Naive thymus-derived CD4-positive, alpha-beta T cell (primary cell): ENCODE measurements at regions of chr3 and their contacts with region 1.

Region 1: DNA sequence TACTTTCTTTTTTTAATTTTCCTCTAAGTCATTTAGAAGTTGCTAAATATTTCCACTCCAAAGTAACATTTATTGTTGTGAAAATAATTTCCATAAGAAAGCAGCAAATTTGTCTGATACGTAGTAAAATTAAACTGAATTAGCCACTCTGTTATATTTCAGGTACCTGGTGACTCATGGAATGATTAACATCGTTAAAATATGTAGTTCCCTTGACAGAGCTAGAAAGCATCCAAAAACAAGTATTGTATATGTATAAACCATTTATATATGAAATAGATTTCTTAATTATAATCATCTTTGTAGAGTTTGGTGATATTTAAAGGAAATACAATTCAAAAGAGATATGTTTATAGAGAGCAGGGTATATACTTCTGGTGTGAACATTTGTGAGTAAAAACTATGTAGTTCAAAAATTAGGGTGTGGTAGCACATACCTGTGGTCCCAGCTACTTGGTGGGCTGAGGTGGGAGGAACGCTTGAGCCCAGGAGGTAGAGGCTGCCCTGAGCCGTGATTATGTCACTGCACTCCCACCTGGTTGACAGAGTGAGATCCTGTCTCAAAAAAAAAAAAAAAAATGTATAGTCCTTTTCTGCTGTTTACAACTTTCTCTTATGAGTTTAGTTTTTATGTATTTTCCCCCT is 36.6 kb downstream of the ATP11B start:
- DNase-seq: no peak
- ATAC-seq: no peak
- H3K4me3 ChIP-seq: no peak overlapping the region
- H3K4me3 Mint-ChIP-seq: no peak overlapping the region
- H3K27ac ChIP-seq: no peak overlapping the region
- H3K27ac Mint-ChIP-seq: peak overlapping the region in 1 of 9 donors; percentile 11
- H3K4me1 ChIP-seq: peaks cover 0 to 2% of the 10 kb centered on the region in 2 donors
- H3K4me1 Mint-ChIP-seq: peaks cover 20 to 44% (median 34%) of the 10 kb centered on the region in 7 donors
- H3K27me3 ChIP-seq: no peaks in the 10 kb centered on the region
- H3K27me3 Mint-ChIP-seq: no peaks in the 10 kb centered on the region

Region 2: GRCh38 chr3:182810574-182811268 is 19.2 kb before region 1 on chr3:
- CTCF ChIA-PET with region 1: interaction called, 3 read pairs
- POLR2A ChIA-PET with region 1: no interaction called
- intact Hi-C with region 1: loop called in 1 of 2 experiments (anchors 2 kb)
- DNase-seq: no peak
- ATAC-seq: no peak
- H3K4me3 ChIP-seq: no peak overlapping the region
- H3K4me3 Mint-ChIP-seq: peak overlapping the region in 3 of 10 donors; percentile 13 to 59 (median 44)
- H3K27ac ChIP-seq: no peak overlapping the region
- H3K27ac Mint-ChIP-seq: peak overlapping the region in 1 of 9 donors; percentile 55
- H3K4me1 ChIP-seq: peaks cover 13 to 36% of the 10 kb centered on the region in 2 donors
- H3K4me1 Mint-ChIP-seq: peaks cover 43 to 96% (median 84%) of the 10 kb centered on the region in 7 donors
- H3K27me3 ChIP-seq: no peaks in the 10 kb centered on the region
- H3K27me3 Mint-ChIP-seq: no peaks in the 10 kb centered on the region

Region 3: DNA sequence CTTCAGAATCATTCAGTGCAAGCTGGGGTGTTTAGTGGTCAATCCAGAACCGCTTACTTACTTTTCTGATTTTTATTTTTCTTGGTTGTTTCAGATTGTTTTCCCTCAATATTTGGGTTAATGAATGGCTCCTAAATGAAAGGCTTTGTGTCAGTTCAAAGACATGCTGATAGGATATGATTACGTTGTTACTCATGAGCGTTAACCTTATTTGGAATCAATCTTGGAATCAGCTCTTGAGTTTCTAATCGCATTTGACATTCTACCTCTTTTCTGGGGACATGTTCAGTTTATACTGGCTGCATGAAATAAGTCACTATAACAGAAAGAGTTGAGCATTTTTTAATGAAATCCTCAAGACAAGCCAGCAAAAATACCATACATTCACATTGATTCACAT is 13.6 kb after region 1 on chr3:
- CTCF ChIA-PET with region 1: interaction called, 3 read pairs
- POLR2A ChIA-PET with region 1: interaction called, 3 read pairs
- intact Hi-C with region 1: loop called in 1 of 2 experiments (anchors 1 kb)
- DNase-seq: no peak
- ATAC-seq: no peak
- H3K4me3 ChIP-seq: no peak overlapping the region
- H3K4me3 Mint-ChIP-seq: no peak overlapping the region
- H3K27ac ChIP-seq: no peak overlapping the region
- H3K27ac Mint-ChIP-seq: peak overlapping the region in 2 of 9 donors; percentile 23 to 40
- H3K4me1 ChIP-seq: no peaks in the 10 kb centered on the region
- H3K4me1 Mint-ChIP-seq: peaks cover 0 to 17% (median 0%) of the 10 kb centered on the region in 7 donors
- H3K27me3 ChIP-seq: no peaks in the 10 kb centered on the region
- H3K27me3 Mint-ChIP-seq: no peaks in the 10 kb centered on the region

Region 4: GRCh38 chr3:182861348-182861747 is 31.5 kb after region 1 on chr3:
- CTCF ChIA-PET with region 1: no interaction called
- POLR2A ChIA-PET with region 1: no interaction called
- intact Hi-C with region 1: no loop called
- DNase-seq: no peak
- ATAC-seq: no peak
- H3K4me3 ChIP-seq: no peak overlapping the region
- H3K4me3 Mint-ChIP-seq: peak overlapping the region in 1 of 10 donors; percentile 51
- H3K27ac ChIP-seq: no peak overlapping the region
- H3K27ac Mint-ChIP-seq: no peak overlapping the region
- H3K4me1 ChIP-seq: no peaks in the 10 kb centered on the region
- H3K4me1 Mint-ChIP-seq: peaks cover 0 to 34% (median 12%) of the 10 kb centered on the region in 7 donors
- H3K27me3 ChIP-seq: no peaks in the 10 kb centered on the region
- H3K27me3 Mint-ChIP-seq: no peaks in the 10 kb centered on the region